ENCODE measurements at regions of chr18 and their contacts with region 1.

Region 1: GRCh38 chr18:52670896-52671295 is 330.9 kb downstream of the DCC start:
- DNase-seq: no peak
- ATAC-seq: no peak

Region 2: GRCh38 chr18:51668101-51668500 is 1002.8 kb before region 1 on chr18:
- intact Hi-C with region 1: loop called in 1 of 2 experiments (anchors 10 kb)
- DNase-seq: peak in 1 of 2 donors; percentile 56
- ATAC-seq: no peak

Measured in left colon (tissue), 2 donors.